Activated CD4-positive, alpha-beta T cell treated with anti-CD3 and anti-CD28 coated beads for 36 hours (primary cell): ENCODE measurements at regions of chr12 and their contacts with region 1.

Region 1: DNA sequence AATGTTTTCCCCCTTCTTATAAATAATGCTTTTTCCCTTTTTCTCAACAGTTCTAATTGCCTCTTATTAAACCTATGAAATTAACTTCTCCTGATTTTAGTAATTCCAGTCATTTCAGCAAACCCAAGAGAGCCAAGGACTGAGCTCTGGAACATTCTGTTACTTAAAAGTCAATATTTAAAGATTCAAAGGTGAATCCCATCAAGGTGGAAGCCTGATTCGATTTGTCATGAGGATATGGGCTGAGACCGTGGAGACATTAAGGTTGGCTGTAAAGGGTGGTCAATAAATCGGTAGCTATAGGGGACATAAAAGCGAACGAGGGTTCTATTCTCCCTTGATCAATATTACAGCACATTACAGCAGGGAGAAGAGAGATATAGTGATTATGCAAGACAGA is 66.6 kb upstream of the NELL2 start:
- DNase-seq: no peak
- ATAC-seq: no peak
- H3K4me3 Mint-ChIP-seq: no peak overlapping the region
- H3K27ac Mint-ChIP-seq: no peak overlapping the region
- H3K4me1 Mint-ChIP-seq: no peaks in the 10 kb centered on the region
- H3K27me3 Mint-ChIP-seq: no peaks in the 10 kb centered on the region

Region 2: DNA sequence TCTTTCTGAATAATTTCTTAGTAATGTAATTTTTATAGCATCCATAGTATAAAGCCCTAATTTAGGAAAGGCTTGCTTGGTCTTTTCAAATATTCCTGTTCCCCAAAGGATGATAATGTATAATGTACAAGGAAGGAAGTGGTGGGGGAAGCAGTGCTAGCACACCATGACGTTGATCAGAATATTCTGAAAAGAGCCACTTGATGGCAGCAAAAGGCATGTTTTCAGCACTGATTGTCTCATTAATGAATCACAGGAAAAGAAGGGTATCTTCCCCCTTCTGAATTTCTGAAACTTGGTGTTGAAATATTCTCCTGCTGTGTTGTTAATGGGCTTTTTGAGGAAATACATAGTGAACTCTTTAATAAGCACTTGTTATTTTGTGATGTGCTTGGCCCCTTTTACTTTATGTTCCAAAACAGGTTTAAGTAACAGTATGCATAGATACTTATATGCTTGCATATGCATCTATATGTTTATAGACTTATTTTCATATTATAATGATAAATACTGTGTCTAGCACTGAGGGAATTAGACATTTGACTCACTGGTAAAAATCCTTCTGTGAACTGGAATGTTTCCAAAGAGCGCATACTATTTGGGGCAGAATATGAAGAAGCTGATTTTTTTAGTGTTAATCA is 984.9 kb before region 1 on chr12:
- CTCF ChIA-PET with region 1: no interaction called
- POLR2A ChIA-PET with region 1: no interaction called
- intact Hi-C with region 1: loop called in 1 of 2 experiments (anchors 5 kb)
- DNase-seq: peak; percentile 18
- ATAC-seq: peak; percentile 61
- H3K4me3 Mint-ChIP-seq: no peak overlapping the region
- H3K27ac Mint-ChIP-seq: no peak overlapping the region
- H3K4me1 Mint-ChIP-seq: no peaks in the 10 kb centered on the region
- H3K27me3 Mint-ChIP-seq: no peaks in the 10 kb centered on the region

Region 3: GRCh38 chr12:44015335-44015941 is 927.3 kb before region 1 on chr12:
- CTCF ChIA-PET with region 1: interaction called, 3 read pairs
- POLR2A ChIA-PET with region 1: no interaction called
- intact Hi-C with region 1: loop called in 1 of 2 experiments (anchors 5 kb)
- DNase-seq: no peak
- ATAC-seq: no peak
- H3K4me3 Mint-ChIP-seq: no peak overlapping the region
- H3K27ac Mint-ChIP-seq: no peak overlapping the region
- H3K4me1 Mint-ChIP-seq: no peaks in the 10 kb centered on the region
- H3K27me3 Mint-ChIP-seq: no peaks in the 10 kb centered on the region

Region 4: DNA sequence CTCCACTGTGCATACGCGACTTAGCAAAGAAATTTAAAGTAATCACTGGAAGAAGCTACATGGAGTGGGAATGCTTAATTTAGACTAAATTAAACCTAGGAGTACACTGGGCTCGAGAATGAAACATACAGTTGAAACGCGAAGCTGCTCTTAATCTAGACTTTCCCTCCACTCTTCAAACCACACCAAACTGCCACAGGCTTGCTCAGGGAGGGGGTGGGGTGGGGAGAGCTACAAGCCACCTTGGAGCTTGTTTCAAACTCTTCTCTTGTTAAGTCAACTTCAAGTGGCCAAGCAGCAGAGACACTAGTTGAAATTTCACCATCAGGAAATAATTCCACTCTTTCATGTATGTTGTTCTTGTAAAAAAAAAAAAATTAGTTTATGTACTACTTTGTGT is 1256.2 kb after region 1 on chr12:
- CTCF ChIA-PET with region 1: no interaction called
- POLR2A ChIA-PET with region 1: no interaction called
- intact Hi-C with region 1: no loop called
- DNase-seq: no peak
- ATAC-seq: no peak
- H3K4me3 Mint-ChIP-seq: no peak overlapping the region
- H3K27ac Mint-ChIP-seq: peak overlapping the region; percentile 56
- H3K4me1 Mint-ChIP-seq: peaks cover 12% of the 10 kb centered on the region
- H3K27me3 Mint-ChIP-seq: no peaks in the 10 kb centered on the region